ENCODE measurements at regions of chr17 and their contacts with region 1.

Region 1: DNA sequence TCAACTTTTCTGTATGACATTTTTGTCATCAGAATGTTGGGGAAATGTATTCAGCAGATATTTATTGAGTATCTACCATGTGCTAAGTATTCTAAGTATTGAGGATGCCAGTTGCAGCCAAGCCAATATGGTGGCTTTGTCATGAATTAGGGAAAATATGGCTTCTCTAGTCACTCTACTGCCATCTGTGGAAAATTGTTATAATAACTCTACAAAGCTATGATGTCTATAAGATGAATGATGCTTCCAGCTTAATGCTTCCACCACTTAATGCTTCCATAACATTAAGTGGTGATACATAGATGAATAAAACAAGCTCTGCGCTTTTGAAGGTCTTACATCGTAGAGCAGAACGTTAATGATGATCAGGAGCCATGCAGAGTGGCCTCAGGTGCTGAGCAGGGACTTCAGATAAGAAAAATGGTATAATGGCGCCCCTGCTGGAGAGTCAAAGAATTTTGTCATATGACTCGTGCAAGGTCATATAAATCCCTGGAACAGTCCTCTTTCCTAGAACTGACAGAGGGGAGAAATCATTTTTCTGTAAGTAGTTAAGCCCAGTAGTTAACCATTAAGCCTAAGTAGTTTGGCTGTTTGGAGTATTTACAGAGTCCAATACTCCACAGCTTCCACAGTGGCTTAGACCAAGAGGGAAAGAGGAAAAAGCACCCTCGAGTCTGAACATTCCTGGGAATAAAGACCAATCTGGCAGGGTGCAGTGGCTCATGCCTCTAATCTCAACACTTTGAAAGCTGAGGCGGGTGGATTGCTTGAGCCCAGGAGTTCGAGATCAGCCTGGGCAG is 2.7 kb upstream of the TMIGD1 start:
- DNase-seq: peak; percentile 74
- ATAC-seq: peak; percentile 56
- H3K4me3 Mint-ChIP-seq: no peak overlapping the region
- H3K27ac Mint-ChIP-seq: peak overlapping the region; percentile 44
- H3K4me1 Mint-ChIP-seq: peaks cover 41% of the 10 kb centered on the region
- H3K27me3 Mint-ChIP-seq: peaks cover 5% of the 10 kb centered on the region

Region 2: GRCh38 chr17:30104575-30105339 is 231.8 kb before region 1 on chr17:
- CTCF ChIA-PET with region 1: interaction called, 170 read pairs
- DNase-seq: peak; percentile 84
- ATAC-seq: peak; percentile 94
- H3K4me3 Mint-ChIP-seq: peak overlapping the region; percentile 75
- H3K27ac Mint-ChIP-seq: peak overlapping the region; percentile 3
- H3K4me1 Mint-ChIP-seq: peaks cover 8% of the 10 kb centered on the region
- H3K27me3 Mint-ChIP-seq: peaks cover 26% of the 10 kb centered on the region

Region 3: DNA sequence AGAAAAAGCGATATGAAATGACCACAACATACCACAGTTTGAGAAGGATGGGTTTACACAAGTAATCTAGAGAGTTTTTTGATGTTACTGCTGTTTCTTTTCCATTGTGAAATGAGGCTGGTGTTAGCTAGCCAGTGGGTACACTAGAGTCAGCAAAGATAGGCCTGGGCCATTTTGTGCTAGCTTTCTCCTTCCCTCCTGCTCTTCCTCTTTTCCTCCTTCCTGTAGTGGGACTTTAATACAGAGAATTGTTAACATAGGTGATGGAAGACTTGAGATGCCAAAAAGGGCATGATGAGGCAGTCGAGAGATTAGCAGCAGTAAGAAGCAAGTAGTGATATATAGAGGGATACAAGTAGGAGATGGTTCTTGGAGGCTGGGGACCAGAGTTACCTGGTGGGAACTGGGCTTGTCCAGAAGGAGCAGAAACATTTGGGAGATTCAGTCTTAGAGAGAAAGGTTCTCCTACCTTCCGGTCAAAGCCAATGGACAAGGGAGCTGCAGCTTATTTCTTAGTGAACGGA is 212.2 kb before region 1 on chr17:
- CTCF ChIA-PET with region 1: interaction called, 113 read pairs
- DNase-seq: no peak
- ATAC-seq: no peak
- H3K4me3 Mint-ChIP-seq: no peak overlapping the region
- H3K27ac Mint-ChIP-seq: no peak overlapping the region
- H3K4me1 Mint-ChIP-seq: peaks cover 34% of the 10 kb centered on the region
- H3K27me3 Mint-ChIP-seq: no peaks in the 10 kb centered on the region

Region 4: DNA sequence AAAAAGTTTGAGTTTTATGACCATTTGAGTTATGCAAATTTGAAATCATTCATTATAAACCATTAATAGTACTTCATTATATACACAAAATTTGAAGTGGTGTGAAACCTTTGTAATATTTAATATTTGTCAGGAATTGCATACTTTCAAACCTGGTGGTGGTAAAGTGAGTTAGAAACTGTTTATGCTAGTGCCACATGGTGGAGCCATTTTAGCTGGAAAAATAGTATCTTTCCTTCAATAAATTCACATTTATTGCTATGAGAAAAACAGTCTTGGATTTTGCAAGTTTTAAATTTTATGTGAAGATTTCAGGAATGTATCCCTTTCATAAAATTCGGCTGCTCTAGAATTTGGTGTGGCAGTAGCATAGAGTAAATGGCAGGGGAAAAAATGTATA is 37.6 kb before region 1 on chr17:
- CTCF ChIA-PET with region 1: interaction called, 15 read pairs
- DNase-seq: no peak
- ATAC-seq: no peak
- H3K4me3 Mint-ChIP-seq: no peak overlapping the region
- H3K27ac Mint-ChIP-seq: no peak overlapping the region
- H3K4me1 Mint-ChIP-seq: peaks cover 3% of the 10 kb centered on the region
- H3K27me3 Mint-ChIP-seq: no peaks in the 10 kb centered on the region

Region 5: GRCh38 chr17:30323895-30324319 is 12.7 kb before region 1 on chr17:
- CTCF ChIA-PET with region 1: interaction called, 32 read pairs
- DNase-seq: peak; percentile 62
- ATAC-seq: peak; percentile 73
- H3K4me3 Mint-ChIP-seq: no peak overlapping the region
- H3K27ac Mint-ChIP-seq: peak overlapping the region; percentile 67
- H3K4me1 Mint-ChIP-seq: peaks cover 19% of the 10 kb centered on the region
- H3K27me3 Mint-ChIP-seq: peaks cover 2% of the 10 kb centered on the region

Region 6: DNA sequence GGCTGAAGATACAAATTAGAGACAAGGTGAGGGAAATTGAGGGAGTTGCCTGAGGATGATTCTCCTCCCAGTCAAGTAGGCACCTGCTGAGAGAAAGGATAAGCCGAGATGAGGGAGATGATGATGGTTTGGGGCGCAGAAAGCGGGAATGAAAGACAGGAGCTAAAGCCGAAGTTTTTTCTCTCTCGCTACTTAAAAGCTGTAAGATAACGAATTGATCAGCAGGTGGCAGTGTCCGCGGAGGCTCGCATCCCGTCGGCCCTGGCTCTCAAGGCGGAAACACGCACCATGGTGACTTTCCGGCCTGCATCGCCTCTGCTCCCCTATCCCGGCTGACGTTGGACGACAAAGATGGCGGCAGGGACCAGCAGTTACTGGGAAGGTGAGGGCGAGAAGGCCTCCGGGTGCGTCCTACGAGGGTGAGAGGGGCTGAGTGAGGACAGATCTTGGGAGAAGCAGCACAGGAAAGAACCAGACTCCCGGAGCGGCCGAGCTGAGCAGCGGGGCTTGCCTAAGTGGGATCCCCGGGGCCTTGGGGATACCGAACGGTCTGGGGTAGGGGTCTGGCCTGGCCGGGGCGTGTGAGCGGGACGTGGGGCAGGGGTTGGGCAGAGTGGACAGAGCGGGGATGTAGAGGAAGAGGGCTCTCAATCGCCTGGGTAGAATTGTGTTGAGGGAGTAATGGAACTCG is 140.7 kb after region 1 on chr17 and contains the start of gene GOSR1:
- CTCF ChIA-PET with region 1: interaction called, 27 read pairs
- DNase-seq: peak; percentile 96
- ATAC-seq: peak; percentile 100
- H3K4me3 Mint-ChIP-seq: peak within 1 kb of the TSS; percentile 94
- H3K27ac Mint-ChIP-seq: peak within 1 kb of the TSS; percentile 96
- H3K4me1 Mint-ChIP-seq: peaks cover 38% of the 10 kb centered on the region
- H3K27me3 Mint-ChIP-seq: no peaks in the 10 kb centered on the region
- total RNA-seq, gene GOSR1: 45.3 to 49.3 TPM

Measured in activated CD8-positive, alpha-beta memory T cell treated with anti-CD3 and anti-CD28 coated beads, Interleukin-2, amount 10 ng/mL, durations not matched to agents 7 days and 5 days (primary cell).